CD4-positive, alpha-beta memory T cell (primary cell): ENCODE measurements at regions of chr6 and their contacts with region 1.

Region 1: DNA sequence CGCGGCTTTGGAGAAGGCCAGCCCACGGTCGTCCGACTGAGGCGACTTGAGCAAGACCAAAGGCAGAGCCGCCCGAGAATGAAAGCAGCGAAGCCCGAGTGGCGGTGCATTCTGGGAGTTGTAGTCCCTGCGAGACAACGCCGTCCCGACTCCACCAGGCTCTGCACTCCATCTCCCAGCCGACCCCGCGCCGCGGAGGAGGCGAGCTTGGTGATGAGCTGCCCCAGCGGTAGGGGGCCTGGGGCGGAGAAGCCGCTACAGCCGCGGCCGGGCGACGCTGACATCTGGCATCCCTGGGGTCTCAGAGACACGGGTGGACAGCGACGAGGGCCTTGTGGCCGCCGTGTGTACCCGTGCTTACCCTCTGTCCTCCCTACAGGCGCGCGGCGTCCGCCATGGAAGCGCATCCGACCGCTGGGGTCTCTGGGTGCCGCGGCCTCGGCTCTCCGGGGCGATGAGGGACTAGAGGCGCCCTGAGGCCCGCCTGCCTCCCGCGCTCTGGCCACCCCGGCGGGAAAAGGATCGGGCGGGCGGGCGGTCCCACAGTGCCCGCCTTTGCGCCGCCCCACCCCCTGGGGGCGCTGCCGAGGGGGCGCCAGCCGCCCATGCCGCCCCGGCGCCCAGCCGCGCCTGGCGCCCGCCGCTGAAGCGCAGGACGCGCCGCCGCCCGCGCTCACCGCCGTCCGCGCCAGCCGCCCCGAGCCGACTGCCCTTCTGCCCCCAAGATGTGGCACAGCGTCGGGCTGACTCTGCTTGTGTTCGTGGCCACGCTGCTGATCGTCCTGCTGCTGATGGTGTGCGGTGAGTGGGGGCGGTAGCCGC is at the start of gene SMIM13:
- DNase-seq: peak; percentile 92 to 96 (median 92)
- H3K4me3 ChIP-seq: peak within 1 kb of the TSS; percentile 78 to 82
- H3K4me3 Mint-ChIP-seq: peak within 1 kb of the TSS; percentile 97 to 99 (median 98)
- H3K27ac ChIP-seq: peak within 1 kb of the TSS; percentile 93
- H3K27ac Mint-ChIP-seq: peak within 1 kb of the TSS; percentile 92 to 98 (median 98)
- H3K4me1 ChIP-seq: peaks cover 26% of the 10 kb centered on the region
- H3K4me1 Mint-ChIP-seq: peaks cover 26 to 38% (median 32%) of the 10 kb centered on the region in 4 donors
- H3K27me3 ChIP-seq: no peaks in the 10 kb centered on the region
- H3K27me3 Mint-ChIP-seq: no peaks in the 10 kb centered on the region
- total RNA-seq, gene SMIM13: 5.4 to 6.1 TPM

Region 2: GRCh38 chr6:10747251-10747972 is 346.4 kb before region 1 on chr6 and contains the start of gene TMEM14B:
- CTCF ChIA-PET with region 1: no interaction called
- POLR2A ChIA-PET with region 1: no interaction called
- intact Hi-C with region 1: loop called (anchors 1 kb)
- DNase-seq: peak; percentile 98 to 99 (median 99)
- H3K4me3 ChIP-seq: peak within 1 kb of the TSS; percentile 76 to 83
- H3K4me3 Mint-ChIP-seq: peak within 1 kb of the TSS; percentile 86 to 99 (median 96)
- H3K27ac ChIP-seq: peak within 1 kb of the TSS; percentile 74
- H3K27ac Mint-ChIP-seq: peak within 1 kb of the TSS; percentile 96 to 99 (median 97)
- H3K4me1 ChIP-seq: peaks cover 44% of the 10 kb centered on the region
- H3K4me1 Mint-ChIP-seq: peaks cover 22 to 72% (median 51%) of the 10 kb centered on the region in 4 donors
- H3K27me3 ChIP-seq: no peaks in the 10 kb centered on the region
- H3K27me3 Mint-ChIP-seq: no peaks in the 10 kb centered on the region
- total RNA-seq, gene TMEM14B: 76.9 to 80.6 TPM

Region 3: GRCh38 chr6:11110921-11111768 is 17.3 kb after region 1 on chr6 and contains the start of gene ERVFRD-1:
- CTCF ChIA-PET with region 1: interaction called, 14 read pairs
- POLR2A ChIA-PET with region 1: interaction called, 3 read pairs
- intact Hi-C with region 1: no loop called
- DNase-seq: no peak
- H3K4me3 ChIP-seq: no peak within 1 kb of the TSS
- H3K4me3 Mint-ChIP-seq: peak within 1 kb of the TSS; percentile 64 to 87 (median 78)
- H3K27ac ChIP-seq: no peak within 1 kb of the TSS
- H3K27ac Mint-ChIP-seq: peak within 1 kb of the TSS; percentile 2 to 87 (median 80)
- H3K4me1 ChIP-seq: peaks cover 16% of the 10 kb centered on the region
- H3K4me1 Mint-ChIP-seq: peaks cover 19 to 39% (median 29%) of the 10 kb centered on the region in 4 donors
- H3K27me3 ChIP-seq: no peaks in the 10 kb centered on the region
- H3K27me3 Mint-ChIP-seq: no peaks in the 10 kb centered on the region
- total RNA-seq, gene ERVFRD-1: not detected

Region 4: GRCh38 chr6:11232193-11232769 is 138.5 kb after region 1 on chr6 and contains the start of gene NEDD9:
- CTCF ChIA-PET with region 1: no interaction called
- POLR2A ChIA-PET with region 1: interaction called, 4 read pairs
- intact Hi-C with region 1: loop called (anchors 1 kb)
- DNase-seq: peak; percentile 90 to 99 (median 94)
- H3K4me3 ChIP-seq: peak within 1 kb of the TSS; percentile 55 to 80
- H3K4me3 Mint-ChIP-seq: peak within 1 kb of the TSS; percentile 91 to 98 (median 94)
- H3K27ac ChIP-seq: peak within 1 kb of the TSS; percentile 89
- H3K27ac Mint-ChIP-seq: peak within 1 kb of the TSS; percentile 96 to 99 (median 98)
- H3K4me1 ChIP-seq: peaks cover 61% of the 10 kb centered on the region
- H3K4me1 Mint-ChIP-seq: peaks cover 46 to 78% (median 54%) of the 10 kb centered on the region in 4 donors
- H3K27me3 ChIP-seq: no peaks in the 10 kb centered on the region
- H3K27me3 Mint-ChIP-seq: no peaks in the 10 kb centered on the region
- total RNA-seq, gene NEDD9: 42.7 to 47.4 TPM

Region 5: DNA sequence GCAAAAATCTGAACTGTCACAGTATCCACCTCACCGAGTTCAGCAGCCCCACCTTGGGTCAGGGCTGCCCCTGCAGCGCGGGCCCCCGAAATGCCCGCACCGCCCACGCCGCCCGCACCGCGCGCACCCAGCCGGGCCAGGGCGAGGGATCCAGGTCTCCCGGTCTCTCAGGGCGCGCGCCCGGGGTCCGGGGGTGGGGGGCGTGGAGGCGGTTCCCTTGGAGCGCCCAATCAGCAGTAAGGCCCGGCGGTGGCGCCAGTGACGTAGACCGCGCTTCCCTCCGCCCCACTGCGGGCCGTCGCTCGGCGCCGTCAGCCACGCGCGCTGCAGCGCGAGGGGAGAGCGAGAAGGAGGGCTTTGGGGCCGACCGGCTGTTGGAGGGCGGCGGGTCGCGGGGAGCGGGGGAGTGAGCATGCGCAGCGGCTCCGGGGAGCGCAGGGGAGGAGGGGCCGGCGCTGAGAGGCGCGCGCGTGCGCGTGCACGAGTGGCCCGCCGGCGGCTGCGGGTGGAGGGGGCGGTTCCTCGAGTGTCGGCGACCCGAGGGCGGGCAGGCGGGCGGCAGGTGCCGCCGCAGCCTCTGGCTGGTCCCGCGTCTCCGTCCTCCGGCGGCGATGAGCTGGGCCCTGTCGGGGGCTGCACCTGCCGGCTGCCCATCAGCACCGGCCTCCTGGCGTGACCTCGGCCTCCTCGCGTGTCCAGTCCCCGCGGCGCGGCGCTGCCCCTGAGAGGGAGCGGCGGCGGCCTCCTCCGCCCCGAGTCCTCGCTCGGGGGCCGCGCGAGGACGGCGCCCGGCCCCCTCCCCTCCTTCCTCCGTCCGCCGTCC is 443.6 kb after region 1 on chr6 and contains the start of gene TMEM170B:
- CTCF ChIA-PET with region 1: no interaction called
- POLR2A ChIA-PET with region 1: interaction called, 8 read pairs
- intact Hi-C with region 1: loop called (anchors 1 kb)
- DNase-seq: peak; percentile 94 to 98 (median 97)
- H3K4me3 ChIP-seq: peak within 1 kb of the TSS; percentile 60 to 77
- H3K4me3 Mint-ChIP-seq: peak within 1 kb of the TSS; percentile 86 to 92 (median 90)
- H3K27ac ChIP-seq: peak within 1 kb of the TSS; percentile 54
- H3K27ac Mint-ChIP-seq: peak within 1 kb of the TSS; percentile 72 to 94 (median 92)
- H3K4me1 ChIP-seq: peaks cover 11% of the 10 kb centered on the region
- H3K4me1 Mint-ChIP-seq: peaks cover 7 to 24% (median 9%) of the 10 kb centered on the region in 4 donors
- H3K27me3 ChIP-seq: no peaks in the 10 kb centered on the region
- H3K27me3 Mint-ChIP-seq: peaks cover 2 to 4% of the 10 kb centered on the region in 2 donors
- total RNA-seq, gene TMEM170B: 1.9 to 2.1 TPM

Region 6: GRCh38 chr6:12791371-12792000 is 1697.7 kb after region 1 on chr6:
- CTCF ChIA-PET with region 1: no interaction called
- POLR2A ChIA-PET with region 1: no interaction called
- intact Hi-C with region 1: no loop called
- DNase-seq: no peak
- H3K4me3 ChIP-seq: no peak overlapping the region
- H3K4me3 Mint-ChIP-seq: no peak overlapping the region
- H3K27ac ChIP-seq: no peak overlapping the region
- H3K27ac Mint-ChIP-seq: no peak overlapping the region
- H3K4me1 ChIP-seq: no peaks in the 10 kb centered on the region
- H3K4me1 Mint-ChIP-seq: no peaks in the 10 kb centered on the region
- H3K27me3 ChIP-seq: no peaks in the 10 kb centered on the region
- H3K27me3 Mint-ChIP-seq: peaks cover 1 to 2% of the 10 kb centered on the region in 2 donors